ENCODE measurements at regions of chr5 and their contacts with region 1.

Region 1: GRCh38 chr5:142644640-142645361 is 41.1 kb downstream of the FGF1 start:
- DNase-seq: peak; percentile 99
- ATAC-seq: peak; percentile 97
- H3K4me3 ChIP-seq: peak overlapping the region; percentile 2; the same call in 1 of the 2 replicates
- H3K27ac ChIP-seq: peak overlapping the region; percentile 79
- H3K4me1 ChIP-seq: peaks cover 23% of the 10 kb centered on the region
- H3K27me3 ChIP-seq: no peaks in the 10 kb centered on the region
- CTCF ChIP-seq: no peak
- POLR2A ChIP-seq: peak; percentile 60
- RAD21 ChIP-seq: no peak; the same call in 1 of the 2 replicates

Region 2: DNA sequence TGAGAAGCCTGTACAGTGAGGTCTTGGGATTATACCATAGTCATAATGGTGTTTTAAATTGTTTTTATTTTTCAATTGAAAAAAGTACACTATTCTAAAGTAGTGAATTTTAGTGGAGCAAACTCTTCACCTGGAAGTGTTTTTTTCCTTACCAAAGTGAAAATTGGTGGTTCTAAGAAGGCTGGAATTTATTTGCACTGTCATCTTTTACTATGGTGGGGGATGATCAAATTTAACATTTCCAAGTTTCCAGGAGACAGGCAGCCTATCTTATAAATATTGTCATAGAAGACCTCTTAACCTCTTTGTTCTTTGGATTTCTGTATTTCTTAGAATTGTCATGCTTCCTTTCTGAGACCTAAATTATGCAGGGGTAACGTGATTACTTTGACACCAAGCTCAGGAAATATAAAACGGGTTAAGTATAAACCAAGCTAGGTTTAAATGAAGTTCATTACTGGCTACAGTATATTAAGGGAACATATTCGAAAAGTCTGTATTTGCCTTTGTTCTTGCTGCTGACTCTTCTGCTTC is 516.1 kb before region 1 on chr5:
- CTCF ChIA-PET with region 1: no interaction called
- POLR2A ChIA-PET with region 1: interaction called, 15 read pairs
- dilution Hi-C with region 1: no loop called
- in situ Hi-C with region 1: no loop called
- intact Hi-C with region 1: no loop called
- DNase-seq: no peak
- ATAC-seq: no peak
- H3K4me3 ChIP-seq: no peak overlapping the region
- H3K27ac ChIP-seq: no peak overlapping the region
- H3K4me1 ChIP-seq: 0 out of 2 replicates have a peak, but pooled peaks cover under 1% of the 10 kb centered on the region
- H3K27me3 ChIP-seq: no peaks in the 10 kb centered on the region
- CTCF ChIP-seq: no peak
- POLR2A ChIP-seq: no peak
- RAD21 ChIP-seq: no peak

Region 3: GRCh38 chr5:142618130-142618523 is 26.7 kb before region 1 on chr5:
- CTCF ChIA-PET with region 1: interaction called, 6 read pairs
- POLR2A ChIA-PET with region 1: interaction called, 10 read pairs
- dilution Hi-C with region 1: no loop called
- in situ Hi-C with region 1: no loop called
- intact Hi-C with region 1: loop called (anchors 2 kb)
- DNase-seq: peak; percentile 93
- ATAC-seq: peak; percentile 35
- H3K4me3 ChIP-seq: no peak overlapping the region
- H3K27ac ChIP-seq: peak overlapping the region; percentile 43; the same call in 1 of the 2 replicates
- H3K4me1 ChIP-seq: peaks cover 27% of the 10 kb centered on the region
- H3K27me3 ChIP-seq: no peaks in the 10 kb centered on the region
- CTCF ChIP-seq: no peak
- POLR2A ChIP-seq: no peak
- RAD21 ChIP-seq: no peak

Region 4: GRCh38 chr5:142727735-142728047 is 82.9 kb after region 1 on chr5:
- CTCF ChIA-PET with region 1: no interaction called
- POLR2A ChIA-PET with region 1: no interaction called
- dilution Hi-C with region 1: no loop called
- in situ Hi-C with region 1: no loop called
- intact Hi-C with region 1: no loop called
- DNase-seq: no peak
- ATAC-seq: no peak
- H3K4me3 ChIP-seq: no peak overlapping the region
- H3K27ac ChIP-seq: no peak overlapping the region
- H3K4me1 ChIP-seq: peaks cover 10% of the 10 kb centered on the region
- H3K27me3 ChIP-seq: peaks cover 10% of the 10 kb centered on the region
- CTCF ChIP-seq: no peak
- POLR2A ChIP-seq: no peak
- RAD21 ChIP-seq: no peak

Measured in IMR-90 (cell line).